PC-3 (cell line): ENCODE measurements at regions of chr20 and their contacts with region 1.

Region 1: GRCh38 chr20:62875419-62876361 is 14.1 kb upstream of the TCFL5 start:
- DNase-seq: peak; percentile 87
- ATAC-seq: peak; percentile 98
- H3K4me3 ChIP-seq: no peak overlapping the region; the same call in 1 of the 2 replicates
- H3K27ac ChIP-seq: peak overlapping the region; percentile 23; the same call in 1 of the 2 replicates
- H3K4me1 ChIP-seq: peaks cover 6% of the 10 kb centered on the region; the same call in 1 of the 2 replicates
- H3K27me3 ChIP-seq: no peaks in the 10 kb centered on the region
- CTCF ChIP-seq: peak; percentile 69

Region 2: GRCh38 chr20:62887147-62887859 is 11.6 kb after region 1 on chr20:
- CTCF ChIA-PET with region 1: interaction called, 4 read pairs
- POLR2A ChIA-PET with region 1: no interaction called
- intact Hi-C with region 1: loop called (anchors 1 kb)
- DNase-seq: peak; percentile 39
- ATAC-seq: peak; percentile 91
- H3K4me3 ChIP-seq: no peak overlapping the region
- H3K27ac ChIP-seq: peak overlapping the region; percentile 12; the same call in 1 of the 2 replicates
- H3K4me1 ChIP-seq: no peaks in the 10 kb centered on the region
- H3K27me3 ChIP-seq: no peaks in the 10 kb centered on the region
- CTCF ChIP-seq: no peak

Region 3: DNA sequence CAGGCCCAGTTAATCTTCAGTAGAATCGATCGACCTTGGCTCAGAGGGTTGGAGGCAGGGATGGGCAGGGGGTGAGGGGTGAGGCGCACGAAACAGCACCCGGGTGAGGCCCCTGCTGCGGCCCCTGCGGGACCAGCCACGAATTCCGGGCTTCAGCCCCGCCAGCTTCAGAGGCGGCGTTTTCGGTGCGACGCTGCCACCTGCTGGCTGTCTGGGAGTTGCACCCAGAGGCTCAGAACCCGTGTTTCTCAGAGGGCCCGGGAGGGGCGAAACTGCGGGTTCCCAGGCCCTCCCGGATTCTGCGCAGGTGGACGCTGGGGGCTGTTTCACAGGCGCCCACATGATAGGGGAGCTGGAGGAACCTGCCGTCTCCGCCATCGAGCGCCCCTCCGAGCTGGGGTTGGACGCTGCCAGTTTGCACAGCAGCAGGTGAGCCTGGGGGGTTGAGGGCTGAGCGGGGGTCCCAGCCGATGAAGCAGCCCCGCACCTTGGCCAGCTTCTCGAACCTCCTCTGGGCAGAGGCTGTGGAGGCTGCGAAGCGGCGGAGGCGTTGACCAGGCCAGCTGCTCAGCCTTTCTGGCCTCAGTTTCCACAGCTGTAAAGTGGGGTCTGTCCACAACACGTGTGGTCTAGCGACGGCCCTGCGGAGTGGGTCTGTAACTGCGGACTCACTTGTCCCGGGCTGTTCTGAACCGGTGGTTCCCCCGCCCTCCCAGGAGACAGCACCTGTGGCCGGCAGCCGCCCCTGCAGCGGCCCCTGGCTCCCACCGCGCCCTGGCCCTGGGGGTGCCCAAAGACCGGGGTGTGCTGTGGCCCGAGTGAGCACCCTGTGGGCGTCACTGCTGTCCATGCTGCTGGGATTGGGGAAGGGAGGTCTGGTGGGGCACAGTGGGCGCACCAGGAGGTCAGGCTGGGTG is 133.6 kb after region 1 on chr20:
- CTCF ChIA-PET with region 1: interaction called, 3 read pairs
- POLR2A ChIA-PET with region 1: no interaction called
- intact Hi-C with region 1: loop called (anchors 2 kb)
- DNase-seq: peak; percentile 85
- ATAC-seq: peak; percentile 89
- H3K4me3 ChIP-seq: peak overlapping the region; percentile 43; the same call in 1 of the 2 replicates
- H3K27ac ChIP-seq: no peak overlapping the region
- H3K4me1 ChIP-seq: peaks cover 3% of the 10 kb centered on the region; the same call in 1 of the 2 replicates
- H3K27me3 ChIP-seq: peaks cover 70% of the 10 kb centered on the region
- CTCF ChIP-seq: peak; percentile 93

Region 4: DNA sequence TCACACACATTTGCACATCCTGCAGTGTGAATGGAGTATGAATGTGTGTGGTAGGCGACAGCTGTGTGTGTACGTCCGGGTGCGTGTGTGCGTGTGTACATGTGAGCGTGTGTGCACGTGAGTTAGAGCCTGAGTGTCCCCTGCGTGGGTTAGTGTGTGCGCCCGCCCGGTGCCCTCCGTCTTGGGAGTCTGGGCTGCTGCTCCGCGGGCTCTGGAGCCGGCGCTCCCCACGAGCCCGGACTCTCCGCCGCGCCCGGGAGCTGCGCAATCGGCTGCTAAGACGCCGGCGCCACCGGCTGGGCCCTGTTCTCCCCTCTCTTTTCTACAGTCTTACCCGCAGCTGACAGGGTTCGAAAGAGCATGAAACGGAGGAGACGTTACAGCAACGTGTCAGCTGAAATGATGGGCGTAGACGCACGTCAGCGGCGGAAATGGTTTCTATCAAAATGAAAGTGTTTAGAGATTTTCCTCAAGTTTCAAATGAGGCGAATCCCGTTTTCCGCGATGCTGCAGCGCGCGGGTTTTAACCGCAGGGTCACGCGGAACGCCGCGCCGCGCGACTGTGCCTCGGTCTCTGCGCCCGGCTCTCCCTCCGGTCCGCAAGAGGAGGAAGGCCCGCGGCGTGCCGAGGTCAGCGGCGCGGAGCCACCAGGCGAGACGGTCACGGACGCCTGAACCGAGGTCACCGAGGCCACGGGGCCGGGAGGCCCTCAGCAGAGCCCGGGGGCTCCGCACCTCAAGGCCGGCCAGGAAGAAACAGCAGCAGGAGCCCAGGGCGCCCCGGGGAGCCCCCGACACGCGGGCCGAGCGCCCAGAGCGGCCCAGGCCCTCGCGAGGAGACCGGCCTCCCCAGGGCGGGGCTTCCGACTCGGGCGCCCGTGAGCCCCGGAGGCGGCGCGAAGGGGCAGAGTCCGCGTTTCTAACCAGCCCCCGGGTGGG is 226.4 kb after region 1 on chr20:
- CTCF ChIA-PET with region 1: no interaction called
- POLR2A ChIA-PET with region 1: interaction called, 12 read pairs
- intact Hi-C with region 1: no loop called
- DNase-seq: peak; percentile 26
- ATAC-seq: peak; percentile 62
- H3K4me3 ChIP-seq: peak overlapping the region; percentile 81
- H3K27ac ChIP-seq: no peak overlapping the region
- H3K4me1 ChIP-seq: peaks cover 8% of the 10 kb centered on the region; the same call in 1 of the 2 replicates
- H3K27me3 ChIP-seq: peaks cover 12% of the 10 kb centered on the region
- CTCF ChIP-seq: no peak